ENCODE measurements at regions of chr7 and their contacts with region 1.

Region 1: DNA sequence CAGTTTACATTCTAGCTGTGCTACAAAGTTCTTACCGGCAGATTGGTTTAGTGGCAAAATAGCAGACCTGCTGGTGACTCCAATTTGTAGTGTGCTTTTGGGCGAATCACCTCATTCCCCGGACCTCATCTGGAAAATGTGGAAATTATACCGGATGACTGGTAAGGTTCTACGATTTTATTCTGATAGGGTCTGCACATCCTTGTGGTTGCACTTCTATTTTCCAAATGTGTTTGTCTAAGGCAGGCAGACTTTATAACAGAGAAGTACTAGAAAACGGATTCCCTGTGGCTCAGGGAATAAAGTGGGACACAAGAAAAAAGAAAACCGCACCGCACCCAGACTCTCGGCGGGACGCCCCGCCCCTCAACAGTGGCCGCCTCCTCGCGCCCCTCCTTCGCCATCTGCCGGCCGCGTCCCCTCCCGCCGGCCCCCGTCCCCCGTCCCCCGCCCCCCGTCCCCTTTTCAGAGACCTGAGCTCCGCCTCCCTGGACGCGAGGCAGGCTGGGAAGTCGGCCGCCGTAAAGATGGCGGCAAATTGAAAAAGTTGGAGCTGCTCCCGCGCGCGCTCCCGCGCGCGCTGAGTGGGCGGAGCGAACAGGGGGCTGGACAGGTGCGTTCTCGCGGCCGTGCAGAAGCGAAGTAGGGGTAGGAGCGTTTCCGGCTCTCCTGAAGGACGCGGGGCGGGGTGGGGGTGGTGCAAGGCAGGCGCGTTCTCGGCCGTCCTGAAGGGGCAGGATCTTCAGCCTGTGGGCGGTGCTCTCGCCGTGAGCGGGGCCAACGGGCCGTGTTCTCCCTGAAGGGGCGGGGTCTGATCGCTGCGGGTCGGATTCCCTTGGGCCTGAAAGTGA is 531 bp upstream of the CCM2 start:
- DNase-seq: peak; percentile 98 to 99 (median 99)
- H3K4me3 ChIP-seq: peak overlapping the region; percentile 18 to 60
- H3K4me3 Mint-ChIP-seq: peak overlapping the region; percentile 94 to 99 (median 96)
- H3K27ac ChIP-seq: peak overlapping the region; percentile 74
- H3K27ac Mint-ChIP-seq: peak overlapping the region; percentile 94 to 99 (median 97)
- H3K4me1 ChIP-seq: peaks cover 66% of the 10 kb centered on the region
- H3K4me1 Mint-ChIP-seq: peaks cover 38 to 63% (median 51%) of the 10 kb centered on the region in 4 donors
- H3K27me3 ChIP-seq: no peaks in the 10 kb centered on the region
- H3K27me3 Mint-ChIP-seq: no peaks in the 10 kb centered on the region

Region 2: DNA sequence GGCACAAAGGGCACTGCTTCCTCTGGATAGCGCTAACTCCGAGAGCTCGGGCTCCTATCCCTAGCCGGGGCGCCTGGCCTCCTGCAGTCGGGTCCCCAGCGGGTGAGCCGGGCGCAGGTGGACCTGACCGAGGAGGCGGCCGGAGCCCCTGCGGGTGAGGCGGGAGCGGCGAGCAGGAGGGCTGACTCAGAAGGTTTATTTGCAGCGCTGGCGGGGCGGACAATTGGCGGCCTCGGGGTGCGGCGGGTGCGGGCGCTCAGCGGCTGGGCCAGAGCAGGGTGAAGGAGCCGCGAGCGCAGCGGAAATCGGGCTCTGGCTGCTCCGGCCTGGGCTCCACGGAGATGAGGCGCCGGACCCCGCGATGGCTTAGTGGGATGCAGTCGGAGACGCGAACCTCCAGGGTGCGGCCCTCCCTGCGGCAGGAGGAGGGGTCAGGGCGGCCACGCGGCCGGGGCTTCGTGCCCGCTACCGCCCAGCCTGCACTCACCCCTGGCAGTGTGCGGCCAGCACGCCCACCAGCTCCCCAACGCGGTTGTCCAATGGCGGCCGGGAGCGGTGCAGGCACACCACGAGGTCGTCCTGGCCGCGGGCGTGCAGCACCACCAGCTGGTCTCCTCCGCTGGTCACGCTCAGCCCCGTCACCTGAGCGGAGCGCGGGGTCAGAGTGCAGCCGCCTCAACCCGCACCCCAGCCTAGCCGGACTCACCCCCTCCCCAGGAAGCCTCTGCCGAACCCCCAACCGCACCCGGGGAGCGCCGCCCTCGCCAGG is 36.8 kb before region 1 on chr7:
- CTCF ChIA-PET with region 1: no interaction called
- POLR2A ChIA-PET with region 1: interaction called, 12 read pairs
- intact Hi-C with region 1: no loop called
- DNase-seq: no peak
- H3K4me3 ChIP-seq: no peak overlapping the region
- H3K4me3 Mint-ChIP-seq: no peak overlapping the region
- H3K27ac ChIP-seq: peak overlapping the region; percentile 26
- H3K27ac Mint-ChIP-seq: peak overlapping the region in 1 of 7 donors; percentile 79
- H3K4me1 ChIP-seq: peaks cover 19% of the 10 kb centered on the region
- H3K4me1 Mint-ChIP-seq: peaks cover 13 to 21% (median 18%) of the 10 kb centered on the region in 4 donors
- H3K27me3 ChIP-seq: no peaks in the 10 kb centered on the region
- H3K27me3 Mint-ChIP-seq: no peaks in the 10 kb centered on the region

Region 3: GRCh38 chr7:44980393-44981034 is 19.0 kb before region 1 on chr7:
- CTCF ChIA-PET with region 1: interaction called, 150 read pairs
- POLR2A ChIA-PET with region 1: interaction called, 479 read pairs
- intact Hi-C with region 1: loop called (anchors 1 kb)
- DNase-seq: peak; percentile 51 to 96 (median 64)
- H3K4me3 ChIP-seq: peak overlapping the region in 1 of 2 donors; percentile 2
- H3K4me3 Mint-ChIP-seq: peak overlapping the region; percentile 52 to 99 (median 97)
- H3K27ac ChIP-seq: peak overlapping the region; percentile 85
- H3K27ac Mint-ChIP-seq: peak overlapping the region; percentile 96 to 99 (median 98)
- H3K4me1 ChIP-seq: peaks cover 78% of the 10 kb centered on the region
- H3K4me1 Mint-ChIP-seq: peaks cover 49 to 100% (median 70%) of the 10 kb centered on the region in 4 donors
- H3K27me3 ChIP-seq: no peaks in the 10 kb centered on the region
- H3K27me3 Mint-ChIP-seq: no peaks in the 10 kb centered on the region

Region 4: GRCh38 chr7:44986218-44987053 is 13.0 kb before region 1 on chr7:
- CTCF ChIA-PET with region 1: interaction called, 8 read pairs
- POLR2A ChIA-PET with region 1: interaction called, 479 read pairs
- intact Hi-C with region 1: loop called (anchors 1 kb)
- DNase-seq: peak; percentile 94 to 96 (median 95)
- H3K4me3 ChIP-seq: peak overlapping the region; percentile 76 to 82
- H3K4me3 Mint-ChIP-seq: peak overlapping the region; percentile 95 to 98 (median 96)
- H3K27ac ChIP-seq: peak overlapping the region; percentile 98
- H3K27ac Mint-ChIP-seq: peak overlapping the region; percentile 98 to 100 (median 99)
- H3K4me1 ChIP-seq: peaks cover 54% of the 10 kb centered on the region
- H3K4me1 Mint-ChIP-seq: peaks cover 35 to 64% (median 48%) of the 10 kb centered on the region in 4 donors
- H3K27me3 ChIP-seq: no peaks in the 10 kb centered on the region
- H3K27me3 Mint-ChIP-seq: no peaks in the 10 kb centered on the region

Region 5: DNA sequence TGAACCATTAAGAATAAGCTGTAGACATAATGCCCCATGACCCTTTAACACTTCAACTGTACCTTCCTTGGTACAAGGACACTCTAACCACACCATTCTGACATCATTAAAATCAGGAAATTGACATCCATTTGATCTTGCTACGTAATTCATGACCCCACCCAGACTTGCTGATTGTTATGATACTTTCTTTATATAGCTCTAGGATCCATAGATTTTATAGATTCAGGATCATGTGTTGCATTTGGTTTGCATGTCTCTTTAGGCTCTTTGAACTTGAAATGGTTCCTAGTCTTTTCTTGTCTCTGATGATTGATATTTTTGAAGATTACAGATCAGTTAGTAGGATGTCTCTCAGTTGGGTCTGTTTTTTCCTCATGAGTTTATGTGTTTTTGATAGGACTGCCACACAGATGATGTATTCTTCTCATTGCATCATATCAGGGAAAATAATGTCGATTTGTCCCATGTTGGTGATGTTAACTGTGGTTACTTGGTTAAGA is 14.0 kb after region 1 on chr7:
- CTCF ChIA-PET with region 1: interaction called, 22 read pairs
- POLR2A ChIA-PET with region 1: interaction called, 17 read pairs
- intact Hi-C with region 1: no loop called
- DNase-seq: peak in 4 of 5 donors; percentile 55 to 71 (median 62)
- H3K4me3 ChIP-seq: no peak overlapping the region
- H3K4me3 Mint-ChIP-seq: peak overlapping the region in 3 of 8 donors; percentile 16 to 50 (median 41)
- H3K27ac ChIP-seq: no peak overlapping the region
- H3K27ac Mint-ChIP-seq: peak overlapping the region; percentile 41 to 92 (median 81)
- H3K4me1 ChIP-seq: peaks cover 23% of the 10 kb centered on the region
- H3K4me1 Mint-ChIP-seq: peaks cover 27 to 59% (median 39%) of the 10 kb centered on the region in 4 donors
- H3K27me3 ChIP-seq: no peaks in the 10 kb centered on the region
- H3K27me3 Mint-ChIP-seq: no peaks in the 10 kb centered on the region

Region 6: GRCh38 chr7:45021604-45022296 is 22.3 kb after region 1 on chr7:
- CTCF ChIA-PET with region 1: interaction called, 57 read pairs
- POLR2A ChIA-PET with region 1: interaction called, 379 read pairs
- intact Hi-C with region 1: no loop called
- DNase-seq: no peak
- H3K4me3 ChIP-seq: no peak overlapping the region
- H3K4me3 Mint-ChIP-seq: peak overlapping the region in 2 of 8 donors; percentile 33 to 36
- H3K27ac ChIP-seq: no peak overlapping the region
- H3K27ac Mint-ChIP-seq: peak overlapping the region in 6 of 7 donors; percentile 19 to 90 (median 68)
- H3K4me1 ChIP-seq: peaks cover 29% of the 10 kb centered on the region
- H3K4me1 Mint-ChIP-seq: peaks cover 32 to 69% (median 50%) of the 10 kb centered on the region in 4 donors
- H3K27me3 ChIP-seq: no peaks in the 10 kb centered on the region
- H3K27me3 Mint-ChIP-seq: no peaks in the 10 kb centered on the region

Region 7: GRCh38 chr7:45111298-45112223 is 112.1 kb after region 1 on chr7 and contains the start of gene TBRG4:
- CTCF ChIA-PET with region 1: interaction called, 3 read pairs
- POLR2A ChIA-PET with region 1: interaction called, 11 read pairs
- intact Hi-C with region 1: loop called (anchors 1 kb)
- DNase-seq: peak; percentile 91 to 94 (median 94)
- H3K4me3 ChIP-seq: peak within 1 kb of the TSS; percentile 94 to 95
- H3K4me3 Mint-ChIP-seq: peak within 1 kb of the TSS; percentile 91 to 99 (median 97)
- H3K27ac ChIP-seq: peak within 1 kb of the TSS; percentile 87
- H3K27ac Mint-ChIP-seq: peak within 1 kb of the TSS; percentile 97 to 100 (median 99)
- H3K4me1 ChIP-seq: peaks cover 48% of the 10 kb centered on the region
- H3K4me1 Mint-ChIP-seq: peaks cover 28 to 60% (median 44%) of the 10 kb centered on the region in 4 donors
- H3K27me3 ChIP-seq: no peaks in the 10 kb centered on the region
- H3K27me3 Mint-ChIP-seq: peaks cover 4% of the 10 kb centered on the region in 2 donors
- total RNA-seq, gene TBRG4: 103 to 129 TPM

Measured in CD4-positive, alpha-beta memory T cell (primary cell).